Heart right ventricle (tissue), 16 donors: ENCODE measurements at regions of chr10 and their contacts with region 1.

Region 1: DNA sequence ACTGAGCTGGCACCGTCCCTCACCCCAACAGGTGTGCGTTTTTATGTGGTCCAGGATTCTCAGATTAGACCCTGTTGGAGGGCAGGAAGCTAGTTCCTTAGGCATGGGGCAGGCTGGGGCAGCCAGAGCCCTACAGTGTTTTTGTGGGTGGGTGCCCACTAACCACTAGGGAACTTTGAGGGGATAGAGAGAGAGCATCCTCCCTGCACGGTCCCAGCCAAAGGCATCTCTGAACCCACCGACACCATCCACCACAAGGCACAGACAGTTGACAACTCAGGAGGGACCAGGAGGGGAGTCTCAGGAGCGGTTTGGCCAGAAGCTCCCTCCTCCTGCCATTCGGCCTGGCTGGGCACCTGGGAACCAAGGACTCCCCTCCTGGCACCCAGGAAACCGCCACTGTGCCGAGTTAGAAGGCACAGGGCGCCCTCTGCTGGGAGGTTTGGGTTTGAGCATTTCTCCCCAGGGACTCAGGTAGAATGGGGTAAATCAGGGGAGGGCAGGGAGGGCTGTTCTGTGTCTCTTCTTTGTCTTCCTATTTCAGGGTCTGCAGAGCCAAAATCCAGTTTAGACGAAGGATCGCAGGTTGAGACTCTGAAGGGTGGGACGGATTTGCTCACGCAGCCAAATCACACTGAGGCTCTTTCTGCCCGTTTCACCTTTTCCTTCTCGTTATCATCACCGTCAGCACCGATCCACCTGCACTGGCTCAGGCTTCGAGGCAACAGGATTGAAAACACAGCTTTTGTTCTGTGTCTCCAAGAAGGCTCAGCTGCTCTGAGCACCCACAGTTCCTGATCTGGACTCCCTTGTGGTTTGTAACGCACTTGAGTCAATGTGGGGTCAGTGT is 84.8 kb upstream of the COL13A1 start:
- DNase-seq: peak in 1 of 2 donors; percentile 40
- ATAC-seq: peak in 7 of 8 donors; percentile 26 to 64 (median 54)
- H3K4me3 ChIP-seq: no peak overlapping the region
- H3K27ac ChIP-seq: no peak overlapping the region
- H3K4me1 ChIP-seq: peaks cover 0 to 17% (median 6%) of the 10 kb centered on the region in 9 donors
- H3K27me3 ChIP-seq: no peaks in the 10 kb centered on the region
- CTCF ChIP-seq: peak; percentile 27 to 72 (median 66)

Region 2: DNA sequence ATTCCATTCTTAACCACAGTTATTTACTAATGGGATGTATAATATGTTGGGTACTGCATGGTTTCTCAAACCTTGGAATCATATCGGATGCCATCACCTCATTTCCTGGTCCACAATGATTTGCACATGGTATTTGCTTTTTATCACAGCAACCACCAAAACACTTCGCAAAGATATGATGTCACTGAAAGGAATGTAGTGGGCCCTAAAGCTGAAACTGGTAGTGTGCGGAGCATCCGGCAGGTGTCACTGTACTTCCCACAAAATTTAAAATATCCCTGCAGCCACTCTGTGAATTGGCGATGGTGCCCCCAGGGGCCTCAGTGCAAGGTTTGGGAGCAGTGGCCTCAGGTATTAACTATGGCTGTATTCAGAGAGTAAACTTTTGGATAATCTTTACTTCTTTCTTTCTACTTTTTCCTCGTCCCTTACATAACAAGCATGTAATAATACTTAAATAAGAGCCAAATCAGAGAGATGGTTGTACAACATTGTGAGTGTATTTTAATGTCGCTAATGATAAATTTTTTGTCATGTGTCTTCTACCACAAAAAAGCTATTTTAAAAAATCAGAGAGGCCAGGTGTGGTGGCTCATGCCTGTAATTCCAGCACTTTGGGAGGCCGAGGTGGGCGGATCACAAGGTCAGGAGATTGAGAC is 20.7 kb before region 1 on chr10:
- intact Hi-C with region 1: loop called in 1 of 10 experiments (anchors 1 kb)
- DNase-seq: peak in 1 of 2 donors; percentile 12
- ATAC-seq: peak in 6 of 8 donors; percentile 42 to 72 (median 60)
- H3K4me3 ChIP-seq: no peak overlapping the region
- H3K27ac ChIP-seq: no peak overlapping the region
- H3K4me1 ChIP-seq: peaks cover 0 to 5% (median 0%) of the 10 kb centered on the region in 9 donors
- H3K27me3 ChIP-seq: peaks cover 0 to 10% (median 3%) of the 10 kb centered on the region in 7 donors
- CTCF ChIP-seq: peak; percentile 21 to 73 (median 61)

Region 3: DNA sequence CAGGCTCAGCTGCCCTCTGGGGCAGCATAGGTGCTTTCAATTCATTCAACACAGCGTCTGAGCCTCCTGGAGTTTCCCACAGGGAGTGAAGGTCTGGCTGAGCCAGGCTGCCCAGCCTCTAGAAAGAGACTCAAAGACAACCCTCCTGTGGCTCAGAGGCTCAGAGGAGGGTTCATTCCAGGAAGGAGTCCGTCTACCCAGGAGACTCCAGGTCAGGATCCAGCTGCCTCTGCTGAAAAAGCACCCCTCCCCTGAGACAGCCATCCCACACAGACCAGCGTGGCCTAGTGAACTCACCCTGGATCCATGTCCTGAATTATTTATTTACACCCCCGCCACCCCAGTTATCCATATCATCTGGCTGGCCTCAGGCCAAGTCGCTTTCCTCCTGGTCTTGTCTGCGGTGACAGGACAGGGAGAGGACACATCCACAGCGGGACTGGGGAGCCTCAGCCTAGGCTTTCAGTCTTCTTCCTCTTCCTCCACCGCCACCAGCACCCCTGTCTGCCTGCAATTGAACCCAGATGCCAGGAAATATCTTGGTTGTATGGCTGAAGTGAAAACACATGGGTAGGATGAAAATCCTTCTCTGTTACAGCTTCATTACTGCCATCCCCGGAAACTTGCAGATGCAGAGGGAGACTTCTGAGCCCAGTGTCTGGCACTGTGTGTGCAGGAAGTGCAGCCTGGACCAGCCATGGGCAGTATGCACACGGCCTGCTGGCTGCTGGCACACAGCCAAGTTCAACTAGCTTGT is 40.8 kb after region 1 on chr10:
- intact Hi-C with region 1: no loop called
- DNase-seq: peak; percentile 24 to 50
- ATAC-seq: peak; percentile 47 to 82 (median 70)
- H3K4me3 ChIP-seq: no peak overlapping the region
- H3K27ac ChIP-seq: no peak overlapping the region
- H3K4me1 ChIP-seq: peaks cover 0 to 16% (median 8%) of the 10 kb centered on the region in 9 donors
- H3K27me3 ChIP-seq: peaks cover 0 to 6% (median 0%) of the 10 kb centered on the region in 7 donors
- CTCF ChIP-seq: no peak

Region 4: GRCh38 chr10:69845574-69846292 is 128.8 kb after region 1 on chr10:
- intact Hi-C with region 1: no loop called
- DNase-seq: peak; percentile 49 to 61
- ATAC-seq: peak; percentile 66 to 96 (median 90)
- H3K4me3 ChIP-seq: no peak overlapping the region
- H3K27ac ChIP-seq: peak overlapping the region in 1 of 10 donors; percentile 29
- H3K4me1 ChIP-seq: peaks cover 0 to 16% (median 8%) of the 10 kb centered on the region in 9 donors
- H3K27me3 ChIP-seq: peaks cover 0 to 13% (median 0%) of the 10 kb centered on the region in 7 donors
- CTCF ChIP-seq: no peak